ENCODE measurements at regions of chr1 and their contacts with region 1.

Region 1: DNA sequence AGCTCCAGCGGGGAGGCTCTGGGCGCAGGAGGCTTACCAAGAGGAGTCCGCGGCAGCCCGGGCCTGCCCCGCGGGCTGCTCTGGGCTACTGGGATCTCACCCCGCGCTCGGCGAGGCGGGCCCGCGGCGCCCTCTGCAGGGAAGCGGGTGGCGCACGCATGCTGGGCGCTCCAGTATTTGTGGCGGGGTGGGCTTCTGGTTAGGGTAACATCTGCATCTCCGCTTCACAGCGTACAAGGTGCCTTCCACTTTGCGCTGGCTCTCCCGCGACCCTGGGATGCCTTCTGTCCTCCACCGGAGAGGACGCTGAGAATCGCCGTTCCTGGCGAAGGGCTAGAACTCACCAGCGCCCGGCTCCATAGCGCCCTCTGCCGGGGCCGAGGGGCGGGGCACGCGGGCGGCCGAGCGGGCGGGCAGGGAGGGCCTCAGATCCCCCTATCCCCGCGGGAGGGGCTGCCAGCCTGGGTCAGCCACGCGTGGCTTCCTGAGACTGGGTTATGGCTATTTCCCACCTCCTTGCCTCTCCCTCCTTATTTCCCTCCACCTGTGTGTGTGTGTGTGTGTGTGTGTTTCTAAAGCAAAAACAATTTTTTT is 46.6 kb upstream of the CTBS start:
- DNase-seq: peak; percentile 95
- H3K4me3 ChIP-seq: peak overlapping the region; percentile 44 to 74 (median 54)
- H3K27ac ChIP-seq: peak overlapping the region; percentile 54 to 83 (median 78)
- H3K4me1 ChIP-seq: peaks cover 0 to 25% (median 10%) of the 10 kb centered on the region in 6 donors
- H3K27me3 ChIP-seq: no peaks in the 10 kb centered on the region
- CTCF ChIP-seq: peak; percentile 82 to 99 (median 96)
- POLR2A ChIP-seq: no peak

Region 2: GRCh38 chr1:84143796-84144565 is 476.8 kb before region 1 on chr1 and contains the start of gene PRKACB:
- intact Hi-C with region 1: loop called (anchors 10 kb)
- DNase-seq: no peak
- H3K4me3 ChIP-seq: peak within 1 kb of the TSS; percentile 1 to 65 (median 30)
- H3K27ac ChIP-seq: peak within 1 kb of the TSS; percentile 10 to 85 (median 78)
- H3K4me1 ChIP-seq: peaks cover 8 to 79% (median 49%) of the 10 kb centered on the region in 6 donors
- H3K27me3 ChIP-seq: no peaks in the 10 kb centered on the region
- CTCF ChIP-seq: no peak
- POLR2A ChIP-seq: peak in 1 of 3 donors; percentile 55
- total RNA-seq, gene PRKACB: 55.6 to 93.0 (median 73.4) TPM

Region 3: GRCh38 chr1:84353695-84354094 is 267.1 kb before region 1 on chr1:
- intact Hi-C with region 1: no loop called
- DNase-seq: no peak
- H3K4me3 ChIP-seq: no peak overlapping the region
- H3K27ac ChIP-seq: peak overlapping the region in 4 of 8 donors; percentile 13 to 65 (median 52)
- H3K4me1 ChIP-seq: no peaks in the 10 kb centered on the region
- H3K27me3 ChIP-seq: no peaks in the 10 kb centered on the region
- CTCF ChIP-seq: no peak
- POLR2A ChIP-seq: no peak